ENCODE measurements at regions of chr16 and their contacts with region 1.

Region 1: GRCh38 chr16:9047686-9048301 is 43.6 kb upstream of the HAPSTR1 start:
- DNase-seq: peak; percentile 79
- H3K4me3 Mint-ChIP-seq: peak overlapping the region; percentile 24
- H3K27ac Mint-ChIP-seq: peak overlapping the region; percentile 83
- H3K4me1 Mint-ChIP-seq: peaks cover 31% of the 10 kb centered on the region
- H3K27me3 Mint-ChIP-seq: no peaks in the 10 kb centered on the region

Region 2: GRCh38 chr16:9068886-9069285 is 21.1 kb after region 1 on chr16:
- intact Hi-C with region 1: loop called (anchors 1 kb)
- DNase-seq: no peak
- H3K4me3 Mint-ChIP-seq: no peak overlapping the region
- H3K27ac Mint-ChIP-seq: no peak overlapping the region
- H3K4me1 Mint-ChIP-seq: peaks cover 15% of the 10 kb centered on the region
- H3K27me3 Mint-ChIP-seq: no peaks in the 10 kb centered on the region

Region 3: GRCh38 chr16:9079430-9079812 is 31.6 kb after region 1 on chr16:
- intact Hi-C with region 1: loop called (anchors 1 kb)
- DNase-seq: no peak
- H3K4me3 Mint-ChIP-seq: no peak overlapping the region
- H3K27ac Mint-ChIP-seq: peak overlapping the region; percentile 71
- H3K4me1 Mint-ChIP-seq: peaks cover 27% of the 10 kb centered on the region
- H3K27me3 Mint-ChIP-seq: no peaks in the 10 kb centered on the region

Measured in activated CD4-positive, alpha-beta T cell treated with anti-CD3 and anti-CD28 coated beads, Interleukin-2, amount 10 ng/mL, durations not matched to agents 24 days and 14 days (primary cell).